ENCODE measurements at regions of chr18 and their contacts with region 1.

Region 1: DNA sequence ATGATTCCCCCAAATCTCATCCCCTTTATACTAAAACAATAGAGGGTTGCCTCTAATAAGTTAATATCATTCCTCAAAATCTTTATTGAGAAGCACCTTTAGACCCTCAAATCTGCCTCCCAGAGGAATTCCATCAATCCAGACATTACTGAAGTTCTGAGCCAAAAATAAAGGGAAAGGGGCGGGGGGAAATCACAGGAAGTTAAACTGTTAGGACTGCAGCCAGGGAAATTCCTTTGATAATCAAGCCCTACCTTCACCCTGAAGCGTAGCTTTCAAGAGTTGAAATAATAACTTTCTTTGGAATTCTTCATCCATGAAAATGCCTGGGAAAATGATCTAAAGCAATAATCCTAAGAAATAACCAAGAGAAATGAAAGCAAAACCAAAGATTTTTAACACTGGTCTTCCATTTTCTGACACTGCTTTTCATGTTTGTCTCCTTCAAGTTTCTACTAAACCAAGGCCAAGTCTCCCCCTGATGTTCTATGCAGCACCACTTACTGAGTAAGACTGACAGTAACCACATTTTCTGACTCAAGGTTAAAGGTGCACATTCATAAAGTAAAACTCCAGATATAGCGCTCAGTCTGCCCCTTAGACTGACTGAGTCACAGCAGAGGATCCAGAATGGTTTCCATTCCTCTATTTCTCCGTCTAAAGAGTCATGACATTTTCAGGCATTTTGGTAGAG is 78.2 kb downstream of the TCF4 start:
- DNase-seq: peak; percentile 53
- H3K4me3 ChIP-seq: peak overlapping the region; percentile 63
- H3K27ac ChIP-seq: peak overlapping the region; percentile 81
- H3K4me1 ChIP-seq: peaks cover 69% of the 10 kb centered on the region
- CTCF ChIP-seq: no peak

Region 2: DNA sequence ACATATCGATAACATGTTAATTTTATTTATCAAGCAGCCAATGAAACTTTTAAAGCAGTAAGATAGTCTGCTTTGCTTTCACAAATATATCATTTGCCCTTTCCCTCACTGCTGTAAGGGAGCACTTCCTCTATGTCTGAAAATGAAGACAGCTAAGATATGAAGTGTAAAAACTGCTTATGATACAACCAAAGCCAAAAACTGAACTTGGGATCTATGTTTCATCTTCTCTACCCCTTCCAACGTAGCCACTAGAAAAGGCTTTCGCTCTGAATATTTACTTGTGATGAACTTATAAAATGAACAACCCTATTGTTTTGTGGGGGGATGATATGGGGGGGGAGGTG is 62.1 kb before region 1 on chr18:
- CTCF ChIA-PET with region 1: no interaction called
- POLR2A ChIA-PET with region 1: interaction called, 8 read pairs
- intact Hi-C with region 1: loop called (anchors 1 kb)
- DNase-seq: peak; percentile 30
- H3K4me3 ChIP-seq: peak overlapping the region; percentile 40
- H3K27ac ChIP-seq: peak overlapping the region; percentile 98
- H3K4me1 ChIP-seq: peaks cover 91% of the 10 kb centered on the region
- CTCF ChIP-seq: no peak

Region 3: DNA sequence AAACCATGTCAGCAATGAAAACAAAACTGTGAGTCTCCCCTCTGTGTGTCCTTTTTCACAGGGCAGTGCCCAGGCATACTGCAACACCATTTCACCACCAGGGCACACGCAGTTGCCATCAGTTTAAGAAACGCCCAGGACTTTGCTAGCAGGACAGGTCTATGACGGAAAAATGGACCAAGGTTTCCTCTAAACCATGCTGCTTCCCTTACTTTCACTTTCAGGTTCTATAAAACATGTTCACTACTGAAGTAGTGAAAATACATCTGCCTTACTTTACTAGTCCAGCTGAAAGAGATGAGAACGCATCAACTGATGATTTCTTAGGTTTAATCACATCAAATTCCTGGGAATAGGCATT is 32.3 kb before region 1 on chr18:
- CTCF ChIA-PET with region 1: no interaction called
- POLR2A ChIA-PET with region 1: interaction called, 6 read pairs
- intact Hi-C with region 1: loop called (anchors 5 kb)
- DNase-seq: peak; percentile 42
- H3K4me3 ChIP-seq: peak overlapping the region; percentile 73
- H3K27ac ChIP-seq: peak overlapping the region; percentile 65
- H3K4me1 ChIP-seq: peaks cover 22% of the 10 kb centered on the region
- CTCF ChIP-seq: no peak